ENCODE measurements at regions of chr17 and their contacts with region 1.

Region 1: DNA sequence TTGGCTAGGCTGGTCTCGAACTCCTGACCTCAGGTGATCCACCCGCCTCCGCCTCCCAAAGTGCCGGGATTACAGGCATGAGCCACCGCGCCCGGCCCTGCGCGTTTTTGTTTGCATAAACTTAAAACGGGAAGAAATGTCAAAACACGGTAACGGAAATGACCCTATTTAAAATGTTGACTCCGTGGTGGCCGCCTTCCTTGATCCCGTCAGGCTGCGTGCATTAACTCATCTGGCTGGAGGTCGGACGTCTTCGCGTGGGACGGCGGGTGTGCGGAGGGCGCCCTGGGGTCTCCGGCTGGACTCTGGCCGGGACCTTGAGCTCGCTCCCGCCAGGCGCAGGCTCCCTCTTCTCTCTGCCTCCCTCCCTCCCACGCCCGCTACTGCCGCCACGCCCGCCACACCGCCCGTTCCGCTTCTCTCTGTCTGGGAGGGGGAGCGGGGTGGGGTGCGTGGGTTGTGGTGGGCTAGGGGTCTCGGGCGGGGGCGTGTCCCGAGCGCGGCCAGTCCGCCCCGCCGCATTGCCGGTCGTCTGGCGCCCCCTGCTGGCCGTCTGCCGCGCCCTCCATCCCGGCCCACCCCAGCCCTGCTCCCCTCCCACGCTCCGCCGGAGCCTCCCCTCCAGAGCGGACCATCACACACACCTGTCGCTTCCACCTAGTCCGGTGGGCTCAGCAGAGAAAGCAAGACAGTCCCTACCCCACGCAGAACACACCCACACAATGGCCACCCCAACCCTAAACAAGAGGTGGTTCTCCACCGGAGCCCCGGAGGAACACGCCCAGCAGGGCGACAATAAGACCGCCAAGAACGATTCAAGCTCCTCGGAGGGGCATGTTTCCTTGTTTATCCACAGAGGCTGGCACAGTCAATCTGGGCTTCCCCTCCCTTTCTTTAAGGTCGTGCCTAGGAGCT is 1.2 kb upstream of the CCDC42 start:
- DNase-seq: peak; percentile 69 to 91 (median 86)
- ATAC-seq: peak; percentile 96
- H3K4me3 ChIP-seq: peak overlapping the region; percentile 50
- H3K27ac ChIP-seq: no peak overlapping the region
- H3K4me1 ChIP-seq: peaks cover 0 to 11% of the 10 kb centered on the region in 2 experiments; a peak in 3 of 5 replicates
- H3K27me3 ChIP-seq: peaks cover 2 to 4% of the 10 kb centered on the region in 2 experiments; a peak in 1 of 5 replicates
- CTCF ChIP-seq: peak in 2 of 3 experiments; percentile 62 to 73; a peak in 5 of 6 replicates
- EP300 ChIP-seq: no peak
- POLR2A ChIP-seq: no peak
- RAD21 ChIP-seq: peak; percentile 66 to 74

Region 2: GRCh38 chr17:8383143-8383822 is 362.6 kb before region 1 on chr17 and contains the start of gene RPL26:
- CTCF ChIA-PET with region 1: interaction called, 4 read pairs
- POLR2A ChIA-PET with region 1: no interaction called
- in situ Hi-C with region 1: no loop called
- intact Hi-C with region 1: loop called (anchors 1 kb)
- DNase-seq: peak; percentile 83 to 96 (median 86)
- ATAC-seq: peak; percentile 87
- H3K4me3 ChIP-seq: peak within 1 kb of the TSS; percentile 53
- H3K27ac ChIP-seq: peak within 1 kb of the TSS; percentile 83
- H3K4me1 ChIP-seq: peaks cover 34 to 39% of the 10 kb centered on the region in 2 experiments
- H3K27me3 ChIP-seq: no peaks in the 10 kb centered on the region
- CTCF ChIP-seq: peak; percentile 84 to 93 (median 86)
- EP300 ChIP-seq: no peak
- POLR2A ChIP-seq: no peak; the same call in 1 of the 2 replicates
- RAD21 ChIP-seq: peak; percentile 63 to 66
- polyA plus RNA-seq, gene RPL26: 1,706 to 1,892 TPM

Region 3: DNA sequence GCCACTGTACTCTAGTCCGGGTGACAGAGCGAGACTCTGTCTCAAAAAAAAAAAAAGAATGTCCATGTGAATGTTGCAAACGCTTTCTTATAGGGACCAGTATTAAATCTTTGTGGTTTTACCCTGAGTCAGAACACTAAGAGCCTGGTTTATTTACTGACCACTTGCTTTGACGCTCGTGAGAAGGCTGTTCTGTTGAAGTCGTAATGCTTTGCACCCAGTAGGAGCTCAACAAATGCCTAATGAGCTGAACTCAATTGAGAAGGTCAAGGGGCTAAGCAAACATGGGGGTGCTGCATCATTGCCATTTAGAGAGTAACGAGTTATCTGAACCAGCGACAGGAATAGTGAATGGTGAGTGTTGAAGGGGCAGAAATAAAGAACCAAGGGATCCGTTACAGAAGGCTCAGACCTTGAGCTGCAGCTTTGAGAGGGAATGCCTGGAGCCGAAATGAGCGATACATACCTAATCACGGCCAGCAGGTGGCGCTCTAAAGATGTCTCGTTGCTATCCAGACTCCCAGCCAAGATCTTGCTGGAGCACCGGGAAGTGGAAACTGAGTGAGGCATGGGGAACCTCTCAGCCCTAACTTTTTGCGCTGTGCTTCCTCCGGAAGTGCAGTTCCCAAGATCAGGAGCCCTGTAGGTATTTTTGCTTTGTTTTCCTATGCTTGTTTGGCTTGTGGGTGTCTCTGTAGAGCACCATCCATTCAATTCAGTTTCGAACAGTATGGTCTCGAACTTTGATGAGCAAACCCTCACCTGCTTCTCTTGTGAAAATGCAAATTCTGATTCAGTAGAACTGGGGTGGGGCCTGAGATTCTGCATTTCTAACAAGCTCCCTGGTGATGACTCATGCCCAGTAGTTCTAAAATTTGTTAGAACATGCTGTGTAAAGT is 335.6 kb before region 1 on chr17:
- CTCF ChIA-PET with region 1: no interaction called
- POLR2A ChIA-PET with region 1: no interaction called
- in situ Hi-C with region 1: loop called (anchors 10 kb)
- intact Hi-C with region 1: loop called (anchors 10 kb)
- DNase-seq: peak; percentile 59 to 88 (median 63)
- ATAC-seq: peak; percentile 88
- H3K4me3 ChIP-seq: no peak overlapping the region
- H3K27ac ChIP-seq: no peak overlapping the region; the same call in 2 of the 3 replicates
- H3K4me1 ChIP-seq: peaks cover 13% of the 10 kb centered on the region in 2 experiments; a peak in 4 of 5 replicates
- H3K27me3 ChIP-seq: no peaks in the 10 kb centered on the region
- CTCF ChIP-seq: peak; percentile 65 to 89 (median 77)
- EP300 ChIP-seq: no peak
- POLR2A ChIP-seq: no peak
- RAD21 ChIP-seq: peak; percentile 61 to 83

Region 4: GRCh38 chr17:8503368-8503767 is 242.5 kb before region 1 on chr17:
- CTCF ChIA-PET with region 1: no interaction called
- POLR2A ChIA-PET with region 1: interaction called, 3 read pairs
- in situ Hi-C with region 1: no loop called
- intact Hi-C with region 1: loop called (anchors 10 kb)
- DNase-seq: no peak
- ATAC-seq: no peak
- H3K4me3 ChIP-seq: no peak overlapping the region
- H3K27ac ChIP-seq: no peak overlapping the region
- H3K4me1 ChIP-seq: no peaks in the 10 kb centered on the region
- H3K27me3 ChIP-seq: no peaks in the 10 kb centered on the region
- CTCF ChIP-seq: no peak
- EP300 ChIP-seq: no peak
- POLR2A ChIP-seq: no peak
- RAD21 ChIP-seq: no peak

Region 5: GRCh38 chr17:8572764-8573163 is 173.1 kb before region 1 on chr17:
- CTCF ChIA-PET with region 1: interaction called, 6 read pairs
- POLR2A ChIA-PET with region 1: no interaction called
- in situ Hi-C with region 1: no loop called
- intact Hi-C with region 1: loop called (anchors 2 kb)
- DNase-seq: no peak
- ATAC-seq: no peak
- H3K4me3 ChIP-seq: no peak overlapping the region
- H3K27ac ChIP-seq: no peak overlapping the region
- H3K4me1 ChIP-seq: no peaks in the 10 kb centered on the region
- H3K27me3 ChIP-seq: no peaks in the 10 kb centered on the region
- CTCF ChIP-seq: peak in 1 of 3 experiments; percentile 42; a peak in 1 of 6 replicates
- EP300 ChIP-seq: no peak
- POLR2A ChIP-seq: no peak
- RAD21 ChIP-seq: peak; percentile 48 to 66; a peak in 3 of 4 replicates

Region 6: GRCh38 chr17:8894673-8895578 is 149.1 kb after region 1 on chr17:
- CTCF ChIA-PET with region 1: no interaction called
- POLR2A ChIA-PET with region 1: no interaction called
- in situ Hi-C with region 1: no loop called
- intact Hi-C with region 1: loop called (anchors 10 kb)
- DNase-seq: peak; percentile 55 to 65 (median 64)
- ATAC-seq: peak; percentile 93
- H3K4me3 ChIP-seq: no peak overlapping the region
- H3K27ac ChIP-seq: no peak overlapping the region
- H3K4me1 ChIP-seq: no peaks in the 10 kb centered on the region; a peak in 2 of 5 replicates
- H3K27me3 ChIP-seq: peaks cover 2 to 19% of the 10 kb centered on the region in 2 experiments; a peak in 2 of 5 replicates
- CTCF ChIP-seq: peak; percentile 61 to 71 (median 68)
- EP300 ChIP-seq: no peak
- POLR2A ChIP-seq: no peak
- RAD21 ChIP-seq: peak; percentile 59 to 68